A673 (cell line): ENCODE measurements at regions of chr12 and their contacts with region 1.

Region 1: GRCh38 chr12:116421785-116422538 is 137.2 kb upstream of the MAP1LC3B2 start:
- DNase-seq: no peak
- H3K4me3 ChIP-seq: no peak overlapping the region
- H3K27ac ChIP-seq: no peak overlapping the region
- H3K4me1 ChIP-seq: no peaks in the 10 kb centered on the region
- H3K27me3 ChIP-seq: no peaks in the 10 kb centered on the region
- CTCF ChIP-seq: no peak

Region 2: DNA sequence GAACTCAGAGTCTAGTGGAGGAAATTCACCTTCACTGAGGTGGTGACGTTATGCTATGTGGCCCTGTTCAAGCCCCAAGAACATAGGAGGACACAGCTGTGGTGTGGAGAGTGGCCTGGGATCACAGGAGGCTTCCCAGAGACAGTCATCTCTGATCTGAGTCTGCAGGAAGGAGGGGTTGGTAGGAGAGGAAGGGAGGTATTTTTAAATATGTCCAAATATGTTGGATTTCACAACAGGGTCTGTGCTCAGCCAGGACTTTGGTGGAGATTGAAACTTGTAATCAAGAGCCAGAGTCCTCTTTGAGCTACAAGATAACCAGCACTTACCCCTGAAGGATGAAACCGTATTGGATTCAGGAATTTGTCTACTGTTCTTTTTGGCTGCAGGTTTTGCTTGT is 118.0 kb before region 1 on chr12:
- CTCF ChIA-PET with region 1: no interaction called
- POLR2A ChIA-PET with region 1: interaction called, 25 read pairs
- intact Hi-C with region 1: no loop called
- DNase-seq: no peak
- H3K4me3 ChIP-seq: no peak overlapping the region
- H3K27ac ChIP-seq: no peak overlapping the region
- H3K4me1 ChIP-seq: no peaks in the 10 kb centered on the region
- H3K27me3 ChIP-seq: no peaks in the 10 kb centered on the region
- CTCF ChIP-seq: no peak